IMR-90 (cell line): ENCODE measurements at regions of chr10 and their contacts with region 1.

Region 1: DNA sequence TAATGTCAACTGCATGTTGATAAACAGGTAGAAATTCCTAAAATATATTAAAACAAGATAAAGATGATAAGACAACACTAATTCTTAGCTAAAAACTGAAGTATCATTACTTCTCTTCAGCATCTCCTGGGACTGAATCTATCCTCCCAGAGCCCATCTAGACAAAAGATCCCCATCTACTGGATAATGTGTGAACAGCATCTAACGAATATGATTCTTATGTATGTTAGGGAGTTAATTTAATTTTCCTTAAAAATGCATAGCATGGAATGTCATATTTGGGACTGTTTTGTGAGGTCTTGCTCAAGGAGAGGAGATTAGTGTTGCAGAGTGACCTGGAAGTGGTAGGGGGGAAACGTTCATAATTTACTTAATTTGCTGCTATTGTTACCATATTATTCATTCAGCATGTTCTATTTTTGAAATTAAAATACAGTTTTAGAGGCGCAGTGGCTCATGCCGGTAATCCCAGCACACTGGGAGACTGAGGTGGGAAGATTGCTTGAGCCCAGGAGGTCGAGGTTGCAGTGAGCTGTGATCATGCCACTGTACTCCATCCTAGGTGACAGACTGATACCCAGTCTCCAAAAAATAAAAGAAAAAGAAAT is 305.1 kb upstream of the CSTF2T start:
- DNase-seq: peak; percentile 67
- ATAC-seq: peak; percentile 85
- H3K4me3 ChIP-seq: no peak overlapping the region
- H3K27ac ChIP-seq: no peak overlapping the region
- H3K4me1 ChIP-seq: peaks cover 1% of the 10 kb centered on the region; the same call in 1 of the 2 replicates
- H3K27me3 ChIP-seq: no peaks in the 10 kb centered on the region
- CTCF ChIP-seq: peak; percentile 75
- POLR2A ChIP-seq: no peak
- RAD21 ChIP-seq: peak; percentile 78

Region 2: GRCh38 chr10:51001587-51001986 is 1002.9 kb before region 1 on chr10:
- CTCF ChIA-PET with region 1: no interaction called
- POLR2A ChIA-PET with region 1: no interaction called
- dilution Hi-C with region 1: no loop called
- in situ Hi-C with region 1: no loop called
- intact Hi-C with region 1: loop called (anchors 10 kb)
- DNase-seq: no peak
- ATAC-seq: peak; percentile 53
- H3K4me3 ChIP-seq: no peak overlapping the region
- H3K27ac ChIP-seq: no peak overlapping the region
- H3K4me1 ChIP-seq: peaks cover 14% of the 10 kb centered on the region
- H3K27me3 ChIP-seq: no peaks in the 10 kb centered on the region
- CTCF ChIP-seq: peak; percentile 70
- POLR2A ChIP-seq: no peak
- RAD21 ChIP-seq: peak; percentile 65

Region 3: GRCh38 chr10:51196508-51197175 is 807.8 kb before region 1 on chr10:
- CTCF ChIA-PET with region 1: no interaction called
- POLR2A ChIA-PET with region 1: no interaction called
- dilution Hi-C with region 1: no loop called
- in situ Hi-C with region 1: no loop called
- intact Hi-C with region 1: loop called (anchors 10 kb)
- DNase-seq: no peak
- ATAC-seq: no peak
- H3K4me3 ChIP-seq: no peak overlapping the region
- H3K27ac ChIP-seq: no peak overlapping the region
- H3K4me1 ChIP-seq: no peaks in the 10 kb centered on the region
- H3K27me3 ChIP-seq: no peaks in the 10 kb centered on the region
- CTCF ChIP-seq: no peak
- POLR2A ChIP-seq: no peak
- RAD21 ChIP-seq: no peak